Naive thymus-derived CD4-positive, alpha-beta T cell (primary cell): ENCODE measurements at regions of chr19 and their contacts with region 1.

Region 1: DNA sequence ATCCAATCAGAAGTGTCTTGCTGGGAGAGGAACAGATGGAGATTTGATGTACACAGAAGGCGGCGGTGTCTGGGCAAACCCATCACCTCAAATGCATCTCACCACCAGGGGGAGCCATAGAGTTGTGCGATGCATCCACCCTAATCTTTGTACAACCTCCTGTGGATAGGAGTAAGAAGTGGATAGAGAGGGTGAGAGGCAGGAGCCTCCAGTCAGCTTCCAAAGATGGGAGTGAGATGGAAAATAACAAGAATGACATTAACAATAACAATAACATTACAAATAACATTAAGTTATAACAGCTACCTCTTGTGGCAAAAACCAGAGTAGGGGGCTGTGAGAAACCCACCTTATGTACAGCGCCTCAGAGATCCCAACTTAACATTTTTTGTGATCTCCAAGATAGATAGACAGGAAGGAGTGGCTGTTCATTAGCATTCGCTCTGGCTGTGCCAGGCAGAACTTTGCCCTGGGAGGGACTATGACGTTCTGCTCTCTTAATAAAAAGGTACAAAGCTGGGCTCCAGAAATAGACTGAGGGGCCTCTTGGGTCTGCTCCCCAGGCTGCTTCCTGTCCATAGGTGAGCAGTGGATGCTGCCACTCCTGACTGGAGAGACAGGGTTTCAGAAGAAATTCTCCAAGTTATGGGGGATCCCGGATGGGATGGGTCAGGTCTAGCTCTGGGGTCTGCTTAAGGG is 5.2 kb upstream of the CEACAM18 start:
- DNase-seq: peak; percentile 39 to 83 (median 59)
- ATAC-seq: peak; percentile 85
- H3K4me3 ChIP-seq: no peak overlapping the region
- H3K4me3 Mint-ChIP-seq: no peak overlapping the region
- H3K27ac ChIP-seq: no peak overlapping the region
- H3K27ac Mint-ChIP-seq: no peak overlapping the region
- H3K4me1 ChIP-seq: no peaks in the 10 kb centered on the region
- H3K4me1 Mint-ChIP-seq: peaks cover 0 to 7% (median 0%) of the 10 kb centered on the region in 7 donors
- H3K27me3 ChIP-seq: no peaks in the 10 kb centered on the region
- H3K27me3 Mint-ChIP-seq: peaks cover 17 to 27% (median 20%) of the 10 kb centered on the region in 5 donors

Region 2: DNA sequence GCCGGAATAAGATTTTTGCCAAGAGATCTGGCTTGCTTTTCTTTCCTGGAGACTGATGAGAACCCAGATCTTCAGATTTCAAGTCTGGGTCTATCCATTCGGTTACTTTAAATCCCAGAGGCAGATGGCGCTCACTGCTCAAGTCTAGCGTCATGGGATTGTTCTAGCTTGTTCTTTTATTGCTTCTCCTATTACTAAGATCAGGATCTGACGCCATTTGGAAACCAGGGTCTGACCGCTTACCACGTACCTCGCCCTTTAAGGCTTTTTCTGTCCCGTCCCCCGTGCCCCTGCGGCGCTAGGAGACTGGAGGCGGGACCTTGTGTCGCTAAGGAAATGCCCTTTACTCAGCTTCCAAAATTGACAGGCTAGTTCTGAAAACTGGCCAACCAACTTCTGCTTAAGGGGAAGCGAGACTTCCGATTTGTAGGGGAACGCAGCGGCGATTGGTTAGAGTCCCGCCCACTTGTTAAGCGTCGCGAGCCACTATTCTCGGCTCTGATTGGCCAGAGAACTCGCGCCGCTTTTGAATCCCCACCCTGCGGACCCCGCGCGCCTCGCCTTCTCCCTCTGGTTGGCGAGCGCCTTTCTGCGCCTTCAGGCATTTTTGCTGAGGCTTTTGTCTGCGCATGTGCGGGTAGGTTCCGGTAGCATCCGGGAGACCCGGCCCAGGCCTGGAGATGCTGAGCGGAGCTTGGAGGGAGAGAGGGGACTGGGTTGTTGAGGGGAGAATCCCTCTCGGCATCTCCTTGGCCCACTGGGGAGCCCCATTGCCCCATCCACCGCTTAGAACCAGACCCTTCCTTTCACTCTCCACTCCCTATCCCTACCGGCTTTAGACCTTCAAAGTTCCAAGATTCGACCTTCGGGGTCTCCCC is 79.0 kb before region 1 on chr19:
- CTCF ChIA-PET with region 1: no interaction called
- POLR2A ChIA-PET with region 1: interaction called, 3 read pairs
- intact Hi-C with region 1: loop called in 1 of 2 experiments (anchors 2 kb)
- DNase-seq: peak; percentile 64 to 91 (median 86)
- ATAC-seq: peak; percentile 95
- H3K4me3 ChIP-seq: peak overlapping the region; percentile 46
- H3K4me3 Mint-ChIP-seq: peak overlapping the region; percentile 79 to 91 (median 86)
- H3K27ac ChIP-seq: peak overlapping the region; percentile 50
- H3K27ac Mint-ChIP-seq: peak overlapping the region; percentile 32 to 97 (median 73)
- H3K4me1 ChIP-seq: peaks cover 0 to 14% of the 10 kb centered on the region in 2 donors
- H3K4me1 Mint-ChIP-seq: peaks cover 6 to 60% (median 16%) of the 10 kb centered on the region in 7 donors
- H3K27me3 ChIP-seq: no peaks in the 10 kb centered on the region
- H3K27me3 Mint-ChIP-seq: peaks cover 0 to 4% (median 0%) of the 10 kb centered on the region in 5 donors

Region 3: DNA sequence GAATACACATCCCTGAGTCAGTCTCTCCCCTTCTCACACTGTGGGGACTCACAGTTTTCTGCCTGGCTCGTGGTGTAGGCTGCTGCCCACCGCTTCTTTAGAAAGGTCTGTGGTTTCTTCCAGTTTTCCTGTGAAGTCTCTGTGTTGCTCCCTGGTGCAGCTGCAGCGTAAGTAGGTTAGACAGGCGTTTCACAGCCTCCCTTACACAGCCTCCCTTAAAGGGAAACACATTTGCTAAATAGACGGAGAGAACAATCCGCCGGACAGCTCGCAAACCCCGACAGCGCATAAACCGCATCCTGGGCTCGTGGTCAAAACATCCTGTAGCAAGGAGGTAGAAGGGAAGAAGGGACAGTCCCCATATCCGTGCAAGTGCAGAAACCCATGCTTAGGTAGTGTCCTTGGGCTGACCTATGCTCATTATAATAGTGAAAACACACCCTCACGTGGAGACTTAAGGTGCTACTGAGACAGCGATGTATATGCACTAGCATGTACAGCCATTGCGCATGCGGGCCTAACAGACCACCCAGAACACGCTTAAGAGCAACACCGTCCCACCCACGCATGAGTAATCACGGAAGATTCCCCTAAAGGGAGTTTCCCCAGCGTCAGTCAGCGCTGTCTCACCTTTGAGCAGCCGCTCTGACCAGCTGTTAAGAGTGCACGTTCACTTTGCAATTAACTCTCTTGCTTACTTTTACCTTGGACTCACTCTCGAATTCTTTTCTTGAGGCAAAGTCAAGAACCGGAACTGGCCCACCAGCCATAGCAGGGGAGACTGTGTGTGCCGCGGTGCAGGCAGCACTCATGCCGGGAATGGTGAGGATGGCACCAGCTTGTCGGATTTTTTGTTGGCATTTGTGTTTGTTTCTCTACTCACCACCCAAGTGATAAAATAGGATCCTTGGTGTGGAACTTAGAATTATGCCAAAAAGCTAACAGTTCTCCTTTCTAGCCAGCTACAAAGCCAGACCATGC is 31.5 kb before region 1 on chr19:
- CTCF ChIA-PET with region 1: interaction called, 8 read pairs
- POLR2A ChIA-PET with region 1: no interaction called
- intact Hi-C with region 1: loop called in 1 of 2 experiments (anchors 2 kb)
- DNase-seq: peak; percentile 27 to 87 (median 68)
- ATAC-seq: peak; percentile 91
- H3K4me3 ChIP-seq: peak overlapping the region; percentile 31
- H3K4me3 Mint-ChIP-seq: peak overlapping the region; percentile 74 to 92 (median 83)
- H3K27ac ChIP-seq: peak overlapping the region; percentile 53
- H3K27ac Mint-ChIP-seq: peak overlapping the region; percentile 49 to 88 (median 77)
- H3K4me1 ChIP-seq: peaks cover 22 to 24% of the 10 kb centered on the region in 2 donors
- H3K4me1 Mint-ChIP-seq: peaks cover 22 to 43% (median 34%) of the 10 kb centered on the region in 7 donors
- H3K27me3 ChIP-seq: peaks cover 0 to 4% of the 10 kb centered on the region in 2 donors
- H3K27me3 Mint-ChIP-seq: peaks cover 0 to 59% (median 5%) of the 10 kb centered on the region in 5 donors

Region 4: GRCh38 chr19:51531349-51532315 is 58.5 kb after region 1 on chr19 and contains the start of gene SIGLEC6:
- CTCF ChIA-PET with region 1: no interaction called
- POLR2A ChIA-PET with region 1: no interaction called
- intact Hi-C with region 1: no loop called
- DNase-seq: no peak
- ATAC-seq: peak; percentile 92
- H3K4me3 ChIP-seq: no peak within 1 kb of the TSS
- H3K4me3 Mint-ChIP-seq: peak within 1 kb of the TSS in 1 of 10 donors; percentile 12
- H3K27ac ChIP-seq: no peak within 1 kb of the TSS
- H3K27ac Mint-ChIP-seq: no peak within 1 kb of the TSS
- H3K4me1 ChIP-seq: no peaks in the 10 kb centered on the region
- H3K4me1 Mint-ChIP-seq: peaks cover 0 to 6% (median 0%) of the 10 kb centered on the region in 7 donors
- H3K27me3 ChIP-seq: peaks cover 0 to 7% of the 10 kb centered on the region in 2 donors
- H3K27me3 Mint-ChIP-seq: peaks cover 47 to 60% (median 53%) of the 10 kb centered on the region in 5 donors
- total RNA-seq, gene SIGLEC6: 0.46 to 2.5 (median 0.64) TPM

Region 5: DNA sequence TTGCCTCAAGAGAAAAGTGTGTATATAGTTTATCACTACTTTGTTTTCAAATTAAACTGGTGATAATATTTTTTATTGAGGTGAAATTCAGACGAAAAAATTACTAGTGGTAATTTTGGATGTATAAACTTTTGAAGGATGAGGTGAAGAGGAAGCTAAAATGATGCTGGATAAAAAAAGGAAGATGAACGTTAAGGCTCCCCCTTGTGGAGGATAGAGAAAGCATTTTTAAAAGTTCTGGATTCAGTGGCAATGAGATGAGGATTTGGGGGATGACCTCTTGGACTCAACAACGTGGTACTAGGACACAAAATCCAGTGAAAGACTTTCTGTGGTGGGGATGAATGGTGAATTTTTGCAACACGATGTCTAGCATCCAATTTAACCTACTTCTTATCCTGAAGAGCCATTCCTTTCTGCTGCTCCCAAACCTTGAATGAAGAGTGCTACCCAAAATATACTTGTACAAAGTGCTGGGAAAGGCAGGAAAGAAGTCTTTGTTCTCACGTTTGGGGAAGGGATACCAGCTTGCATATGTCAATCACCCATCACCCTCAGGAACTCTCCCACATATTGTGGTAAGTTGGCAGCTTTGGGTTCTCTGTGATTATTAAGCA is 164.3 kb after region 1 on chr19:
- CTCF ChIA-PET with region 1: no interaction called
- POLR2A ChIA-PET with region 1: no interaction called
- intact Hi-C with region 1: loop called in 1 of 2 experiments (anchors 5 kb)
- DNase-seq: peak in 1 of 9 donors; percentile 3
- ATAC-seq: no peak
- H3K4me3 ChIP-seq: no peak overlapping the region
- H3K4me3 Mint-ChIP-seq: peak overlapping the region in 1 of 10 donors; percentile 40
- H3K27ac ChIP-seq: no peak overlapping the region
- H3K27ac Mint-ChIP-seq: no peak overlapping the region
- H3K4me1 ChIP-seq: no peaks in the 10 kb centered on the region
- H3K4me1 Mint-ChIP-seq: peaks cover 0 to 2% (median 0%) of the 10 kb centered on the region in 7 donors
- H3K27me3 ChIP-seq: no peaks in the 10 kb centered on the region
- H3K27me3 Mint-ChIP-seq: peaks cover 0 to 53% (median 24%) of the 10 kb centered on the region in 5 donors

Region 6: DNA sequence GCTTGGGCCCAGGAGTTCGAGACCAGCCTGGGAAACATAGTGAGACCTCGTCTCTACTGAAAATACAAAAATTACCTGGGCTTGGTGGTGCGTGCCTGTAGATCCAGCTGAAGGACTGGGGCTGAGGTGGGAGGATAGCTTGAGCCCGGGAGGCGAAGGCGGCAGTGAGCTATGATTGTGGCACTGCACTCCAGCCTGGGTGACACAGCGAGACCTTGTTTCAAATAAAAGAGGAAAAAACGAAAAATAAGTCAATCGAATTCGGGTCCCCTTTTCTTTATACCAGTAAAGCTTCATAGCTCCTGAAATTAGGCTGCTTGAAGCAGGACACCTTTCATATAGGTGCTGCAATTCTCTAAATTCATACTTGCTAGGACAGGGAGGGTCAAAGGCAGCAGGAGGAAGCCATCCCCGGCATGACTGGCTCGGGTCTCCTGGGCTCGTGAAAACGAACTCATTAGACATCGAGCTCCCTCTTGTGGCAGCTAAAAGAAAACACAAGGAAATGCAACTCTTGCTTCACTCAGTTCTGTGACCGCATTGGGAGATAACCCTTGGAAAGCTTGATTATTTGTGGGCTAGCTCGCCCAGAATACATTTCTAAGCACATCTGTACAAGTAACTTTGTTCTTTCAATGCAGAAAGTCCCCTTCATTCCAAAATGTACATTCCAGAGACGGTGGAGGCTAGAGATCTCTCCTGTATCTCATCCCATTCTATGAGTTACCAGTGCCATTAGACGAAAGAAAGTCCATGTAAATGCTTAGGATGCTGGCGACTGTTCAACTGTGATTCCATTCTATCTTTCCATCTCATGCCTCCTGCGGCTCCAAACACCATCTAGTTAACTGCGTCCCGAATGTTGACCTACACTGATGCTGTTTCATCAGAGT is 304.7 kb after region 1 on chr19:
- CTCF ChIA-PET with region 1: interaction called, 9 read pairs
- POLR2A ChIA-PET with region 1: no interaction called
- intact Hi-C with region 1: loop called in 1 of 2 experiments (anchors 1 kb)
- DNase-seq: peak in 8 of 9 donors; percentile 4 to 43 (median 35)
- ATAC-seq: peak; percentile 76
- H3K4me3 ChIP-seq: no peak overlapping the region
- H3K4me3 Mint-ChIP-seq: no peak overlapping the region
- H3K27ac ChIP-seq: no peak overlapping the region
- H3K27ac Mint-ChIP-seq: no peak overlapping the region
- H3K4me1 ChIP-seq: no peaks in the 10 kb centered on the region
- H3K4me1 Mint-ChIP-seq: peaks cover 0 to 7% (median 0%) of the 10 kb centered on the region in 7 donors
- H3K27me3 ChIP-seq: peaks cover 0 to 8% of the 10 kb centered on the region in 2 donors
- H3K27me3 Mint-ChIP-seq: peaks cover 13 to 71% (median 68%) of the 10 kb centered on the region in 5 donors